ENCODE measurements at regions of chr6 and their contacts with region 1.

Region 1: DNA sequence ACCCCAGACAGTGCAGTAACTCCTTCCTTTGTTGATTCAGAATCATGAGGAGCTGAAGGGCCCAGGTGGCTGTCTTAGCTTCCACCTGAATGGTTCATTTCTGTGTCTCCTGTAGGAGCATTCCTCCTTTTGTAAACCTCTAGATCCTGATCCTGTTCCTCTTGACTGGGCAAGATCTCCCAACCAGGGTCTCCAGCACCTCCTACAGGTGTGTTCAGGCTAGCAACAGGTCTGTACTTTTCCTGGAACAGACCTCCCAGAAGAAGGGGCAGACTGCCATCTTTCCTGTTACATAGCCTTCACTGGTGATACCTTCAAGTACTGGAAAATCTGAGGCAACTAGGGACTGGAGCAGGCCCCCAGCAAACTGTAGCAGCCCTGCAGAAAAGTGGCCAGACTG is 35.2 kb downstream of the HLA-B start:
- DNase-seq: no peak
- ATAC-seq: no peak

Region 2: GRCh38 chr6:31308050-31308844 is 13.6 kb before region 1 on chr6:
- intact Hi-C with region 1: loop called (anchors 2 kb)
- DNase-seq: no peak
- ATAC-seq: peak; percentile 42

Region 3: DNA sequence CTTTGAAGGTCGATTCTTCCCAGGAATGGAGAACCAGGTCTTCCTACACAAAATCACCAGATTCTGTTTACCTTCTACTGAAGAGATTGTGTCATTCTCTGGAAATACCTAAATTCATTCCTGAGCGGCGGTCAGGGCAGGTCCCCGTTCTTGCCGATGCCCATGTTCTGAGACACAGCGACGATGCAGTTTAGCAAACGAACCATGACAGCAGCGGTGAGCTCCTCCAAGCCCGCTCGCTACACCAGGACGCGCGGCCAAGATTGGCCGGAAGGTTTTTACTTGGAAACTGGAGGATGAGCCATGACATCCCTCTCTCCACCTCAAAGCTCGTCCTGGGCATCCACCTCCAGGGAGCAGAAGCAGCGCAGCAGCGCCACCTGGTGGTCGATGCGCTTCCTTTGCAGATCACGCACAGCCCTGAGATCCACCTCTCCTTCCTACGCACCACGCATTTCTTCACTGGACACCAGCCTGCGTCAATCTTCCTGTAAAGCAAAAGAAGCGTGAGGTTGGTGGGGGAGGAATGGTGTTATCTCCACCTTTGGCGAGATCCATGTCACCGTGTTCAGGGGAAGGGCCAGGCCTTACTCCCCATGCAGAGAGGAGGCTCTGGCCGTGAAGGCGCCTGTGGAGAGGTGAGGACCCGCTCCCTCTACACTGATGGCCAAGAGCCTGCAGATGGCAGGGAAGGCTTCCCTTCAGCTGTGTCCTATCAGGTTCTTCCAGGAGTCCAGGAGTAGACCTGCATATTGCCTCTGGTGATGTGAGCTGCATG is 45.1 kb after region 1 on chr6:
- intact Hi-C with region 1: loop called (anchors 2 kb)
- DNase-seq: peak; percentile 92
- ATAC-seq: peak; percentile 100

Region 4: GRCh38 chr6:31717499-31718222 is 395.8 kb after region 1 on chr6:
- intact Hi-C with region 1: no loop called
- DNase-seq: no peak
- ATAC-seq: no peak